ENCODE measurements at regions of chr11 and their contacts with region 1.

Region 1: GRCh38 chr11:55949330-55949729 is 13.1 kb upstream of the OR5I1 start:
- DNase-seq: no peak
- ATAC-seq: no peak
- H3K4me3 Mint-ChIP-seq: no peak overlapping the region
- H3K27ac Mint-ChIP-seq: no peak overlapping the region
- H3K4me1 Mint-ChIP-seq: no peaks in the 10 kb centered on the region
- H3K27me3 Mint-ChIP-seq: no peaks in the 10 kb centered on the region

Region 2: GRCh38 chr11:55902303-55902702 is 47.0 kb before region 1 on chr11:
- CTCF ChIA-PET with region 1: no interaction called
- POLR2A ChIA-PET with region 1: no interaction called
- intact Hi-C with region 1: loop called in 1 of 2 experiments (anchors 5 kb)
- DNase-seq: no peak
- ATAC-seq: no peak
- H3K4me3 Mint-ChIP-seq: no peak overlapping the region
- H3K27ac Mint-ChIP-seq: no peak overlapping the region
- H3K4me1 Mint-ChIP-seq: no peaks in the 10 kb centered on the region
- H3K27me3 Mint-ChIP-seq: no peaks in the 10 kb centered on the region

Region 3: DNA sequence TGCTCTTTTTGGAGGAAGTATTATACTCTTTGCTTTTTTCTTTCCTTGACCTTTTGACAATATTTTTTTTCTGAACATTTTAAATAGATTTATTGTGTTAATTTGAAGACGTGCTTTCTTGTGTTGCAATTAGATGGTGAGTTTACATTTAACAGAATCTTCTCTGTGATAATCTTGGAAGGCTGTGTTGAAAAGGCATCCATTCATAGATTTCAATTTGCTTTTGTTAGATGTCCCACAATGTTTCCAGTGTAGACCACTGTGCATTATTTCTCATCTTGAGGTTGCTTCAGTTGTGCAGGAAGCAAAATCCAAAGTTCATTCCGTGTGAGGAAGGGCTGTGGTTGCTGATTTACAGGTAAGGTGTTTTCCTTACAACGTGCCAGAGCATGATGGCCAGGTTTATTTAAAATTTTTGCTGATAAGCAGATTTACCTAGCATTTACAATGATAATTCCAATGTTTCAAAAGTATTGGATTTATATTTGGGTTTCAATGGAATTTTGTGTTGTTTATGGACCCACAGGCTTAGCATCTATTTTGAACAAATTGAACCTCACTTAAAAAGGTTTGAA is 223.0 kb after region 1 on chr11:
- CTCF ChIA-PET with region 1: no interaction called
- POLR2A ChIA-PET with region 1: no interaction called
- intact Hi-C with region 1: no loop called
- DNase-seq: no peak
- ATAC-seq: no peak
- H3K4me3 Mint-ChIP-seq: no peak overlapping the region
- H3K27ac Mint-ChIP-seq: no peak overlapping the region
- H3K4me1 Mint-ChIP-seq: no peaks in the 10 kb centered on the region
- H3K27me3 Mint-ChIP-seq: no peaks in the 10 kb centered on the region

Measured in activated CD4-positive, alpha-beta T cell treated with anti-CD3 and anti-CD28 coated beads for 36 hours (primary cell).